Panc1 (cell line): ENCODE measurements at regions of chr3 and their contacts with region 1.

Region 1: DNA sequence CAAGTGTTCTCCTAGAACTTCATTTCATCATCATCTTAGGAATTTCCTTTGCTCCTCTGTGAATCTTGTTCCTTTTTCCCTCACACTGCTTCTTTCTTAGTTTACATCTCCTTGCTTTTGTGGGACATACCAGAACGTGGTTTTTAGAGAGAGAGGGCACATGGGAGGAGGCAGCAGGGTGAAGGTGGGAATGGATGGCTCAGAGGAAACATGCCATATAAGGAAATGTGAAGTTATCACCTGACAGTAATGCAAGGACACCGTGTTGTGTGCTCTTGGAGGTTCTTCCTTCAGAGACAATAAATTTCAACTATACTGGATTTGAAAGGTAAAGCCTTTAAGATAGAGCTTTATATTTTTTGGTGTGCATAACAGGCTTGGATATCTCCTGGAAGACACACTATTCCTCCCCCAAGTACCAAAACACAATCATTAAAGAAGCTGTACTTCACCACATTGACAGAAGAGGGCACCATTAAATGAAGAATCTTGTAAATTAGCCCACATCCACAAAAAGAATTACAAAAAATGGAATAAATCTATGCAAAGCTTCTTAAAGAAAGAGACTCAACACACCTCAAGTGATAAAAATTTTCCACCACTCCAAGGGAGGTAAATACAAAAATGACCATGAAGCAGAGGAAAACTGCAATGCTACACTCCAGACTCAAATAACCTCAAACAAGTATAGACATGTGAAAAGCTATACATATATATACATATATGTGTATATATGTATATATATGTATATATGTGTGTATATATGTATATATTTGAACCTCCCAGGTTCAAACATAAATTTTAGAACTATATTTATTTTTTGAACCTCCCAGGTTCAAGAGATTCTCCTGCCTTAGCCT is 26.1 kb downstream of the RPL39L start:
- DNase-seq: peak; percentile 32
- ATAC-seq: no peak
- H3K4me3 ChIP-seq: no peak overlapping the region
- H3K27ac ChIP-seq: no peak overlapping the region
- H3K4me1 ChIP-seq: no peaks in the 10 kb centered on the region
- H3K27me3 ChIP-seq: no peaks in the 10 kb centered on the region
- CTCF ChIP-seq: peak; percentile 76

Region 2: GRCh38 chr3:186828340-186828739 is 284.8 kb before region 1 on chr3:
- CTCF ChIA-PET with region 1: no interaction called
- POLR2A ChIA-PET with region 1: interaction called, 15 read pairs
- in situ Hi-C with region 1: no loop called
- intact Hi-C with region 1: no loop called
- DNase-seq: no peak
- ATAC-seq: no peak
- H3K4me3 ChIP-seq: no peak overlapping the region
- H3K27ac ChIP-seq: no peak overlapping the region
- H3K4me1 ChIP-seq: 0 out of 2 replicates have a peak, but pooled peaks cover 3% of the 10 kb centered on the region
- H3K27me3 ChIP-seq: peaks cover 53% of the 10 kb centered on the region
- CTCF ChIP-seq: no peak

Region 3: DNA sequence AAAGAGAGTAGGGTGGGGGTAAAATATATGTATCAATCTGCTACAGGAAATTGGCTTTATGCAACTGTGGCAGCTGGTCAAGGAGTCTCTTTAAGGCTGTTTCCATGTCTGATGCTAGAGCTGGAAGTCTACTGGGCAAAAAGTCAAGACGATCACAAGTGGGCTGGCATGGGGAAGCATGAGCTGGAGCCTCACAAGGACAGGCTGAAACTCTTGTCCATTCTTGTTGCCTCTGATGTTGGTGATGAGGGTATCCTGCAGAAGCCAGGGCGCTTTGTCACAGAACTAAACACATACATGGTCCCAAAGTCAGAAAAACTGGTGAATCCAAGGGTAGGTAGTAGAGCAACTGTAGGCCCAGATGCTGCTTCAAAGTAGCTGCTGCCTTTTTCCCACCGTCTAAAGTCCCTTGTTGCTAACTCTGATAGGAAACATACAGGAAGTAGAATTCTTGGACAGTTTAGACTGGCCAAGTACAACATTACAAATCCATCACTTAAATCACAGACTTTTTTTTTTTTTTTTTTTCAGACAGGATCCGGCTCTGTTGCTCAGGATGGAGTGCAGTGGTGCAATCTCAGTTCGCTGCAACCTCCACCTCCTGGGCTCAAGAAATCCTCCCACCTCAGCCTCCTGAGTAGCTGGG is 28.0 kb before region 1 on chr3:
- CTCF ChIA-PET with region 1: interaction called, 12 read pairs
- POLR2A ChIA-PET with region 1: no interaction called
- in situ Hi-C with region 1: no loop called
- intact Hi-C with region 1: no loop called
- DNase-seq: no peak
- ATAC-seq: no peak
- H3K4me3 ChIP-seq: no peak overlapping the region
- H3K27ac ChIP-seq: no peak overlapping the region
- H3K4me1 ChIP-seq: no peaks in the 10 kb centered on the region
- H3K27me3 ChIP-seq: no peaks in the 10 kb centered on the region
- CTCF ChIP-seq: no peak

Region 4: GRCh38 chr3:187139126-187139894 is 26.1 kb after region 1 on chr3 and contains the start of gene RPL39L:
- CTCF ChIA-PET with region 1: interaction called, 18 read pairs
- POLR2A ChIA-PET with region 1: interaction called, 3 read pairs
- in situ Hi-C with region 1: no loop called
- intact Hi-C with region 1: no loop called
- DNase-seq: peak; percentile 77
- ATAC-seq: peak; percentile 98
- H3K4me3 ChIP-seq: peak within 1 kb of the TSS; percentile 48 to 71
- H3K27ac ChIP-seq: peak within 1 kb of the TSS; percentile 60; the same call in 1 of the 2 replicates
- H3K4me1 ChIP-seq: no peaks in the 10 kb centered on the region
- H3K27me3 ChIP-seq: no peaks in the 10 kb centered on the region
- CTCF ChIP-seq: peak; percentile 95
- total RNA-seq, gene RPL39L: 37.7 TPM

Region 5: GRCh38 chr3:187164885-187165543 is 51.9 kb after region 1 on chr3:
- CTCF ChIA-PET with region 1: interaction called, 23 read pairs
- POLR2A ChIA-PET with region 1: interaction called, 8 read pairs
- in situ Hi-C with region 1: no loop called
- intact Hi-C with region 1: loop called (anchors 5 kb)
- DNase-seq: peak; percentile 25
- ATAC-seq: peak; percentile 74; the same call in 1 of the 2 replicates
- H3K4me3 ChIP-seq: no peak overlapping the region
- H3K27ac ChIP-seq: no peak overlapping the region
- H3K4me1 ChIP-seq: no peaks in the 10 kb centered on the region
- H3K27me3 ChIP-seq: peaks cover 9% of the 10 kb centered on the region; the same call in 1 of the 2 replicates
- CTCF ChIP-seq: peak; percentile 84

Region 6: GRCh38 chr3:187274977-187275338 is 161.8 kb after region 1 on chr3:
- CTCF ChIA-PET with region 1: no interaction called
- POLR2A ChIA-PET with region 1: no interaction called
- in situ Hi-C with region 1: no loop called
- intact Hi-C with region 1: no loop called
- DNase-seq: no peak
- ATAC-seq: 0 out of 2 replicates have a peak, but pooled peaks have one; percentile 38
- H3K4me3 ChIP-seq: no peak overlapping the region
- H3K27ac ChIP-seq: no peak overlapping the region
- H3K4me1 ChIP-seq: no peaks in the 10 kb centered on the region
- H3K27me3 ChIP-seq: peaks cover 16% of the 10 kb centered on the region; the same call in 1 of the 2 replicates
- CTCF ChIP-seq: no peak

Region 7: GRCh38 chr3:187403768-187404270 is 290.7 kb after region 1 on chr3:
- CTCF ChIA-PET with region 1: no interaction called
- POLR2A ChIA-PET with region 1: no interaction called
- in situ Hi-C with region 1: no loop called
- intact Hi-C with region 1: no loop called
- DNase-seq: peak; percentile 98
- ATAC-seq: peak; percentile 96
- H3K4me3 ChIP-seq: no peak overlapping the region
- H3K27ac ChIP-seq: peak overlapping the region; percentile 86
- H3K4me1 ChIP-seq: peaks cover 28% of the 10 kb centered on the region
- H3K27me3 ChIP-seq: no peaks in the 10 kb centered on the region
- CTCF ChIP-seq: no peak